ENCODE measurements at regions of chr6 and their contacts with region 1.

Region 1: DNA sequence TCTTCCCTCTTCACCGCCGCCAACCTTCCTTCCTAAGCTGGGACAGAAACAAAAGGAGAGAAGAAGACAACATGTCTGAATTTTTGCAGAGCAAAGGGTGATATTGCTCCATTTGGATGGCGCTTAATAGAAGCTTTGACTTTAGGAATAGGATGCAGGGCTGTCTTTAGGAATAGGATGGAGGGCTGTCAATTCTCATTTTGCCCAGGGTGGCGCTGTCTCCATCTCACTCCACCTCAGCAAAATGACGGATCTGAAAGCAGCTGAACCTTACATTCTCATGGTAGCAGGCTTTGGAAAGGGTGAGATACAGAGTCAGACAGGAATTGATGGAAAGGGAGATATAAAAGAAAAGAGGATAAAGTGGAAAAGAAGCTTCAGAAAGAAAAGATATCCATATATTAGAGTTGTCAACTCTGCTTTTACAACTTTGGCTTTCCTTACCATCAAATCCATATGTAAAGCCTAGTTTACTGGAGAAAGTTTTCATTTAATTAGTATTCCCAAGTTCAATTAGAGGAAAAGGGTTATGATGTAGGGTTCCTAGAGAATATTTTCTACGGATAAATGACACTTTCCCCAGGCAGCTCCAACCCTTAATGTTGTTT is 2.4 kb downstream of the MTCL3 start:
- DNase-seq: peak; percentile 57
- ATAC-seq: peak; percentile 28
- H3K4me3 ChIP-seq: peak overlapping the region; percentile 30 to 72 (median 58)
- H3K4me3 Mint-ChIP-seq: peak overlapping the region; percentile 90
- H3K27ac ChIP-seq: no peak overlapping the region
- H3K27ac Mint-ChIP-seq: peak overlapping the region; percentile 4
- H3K4me1 ChIP-seq: peaks cover 24 to 36% of the 10 kb centered on the region in 2 donors
- H3K4me1 Mint-ChIP-seq: peaks cover 23% of the 10 kb centered on the region
- H3K27me3 ChIP-seq: peaks cover 2 to 57% (median 45%) of the 10 kb centered on the region in 4 experiments
- H3K27me3 Mint-ChIP-seq: peaks cover 53% of the 10 kb centered on the region
- CTCF ChIP-seq: peak; percentile 78

Region 2: GRCh38 chr6:127342946-127343808 is 173.6 kb before region 1 on chr6 and contains the start of gene ECHDC1:
- CTCF ChIA-PET with region 1: no interaction called
- POLR2A ChIA-PET with region 1: no interaction called
- intact Hi-C with region 1: loop called (anchors 5 kb)
- DNase-seq: peak; percentile 80
- ATAC-seq: peak; percentile 69
- H3K4me3 ChIP-seq: peak within 1 kb of the TSS; percentile 70 to 97 (median 94)
- H3K4me3 Mint-ChIP-seq: no peak within 1 kb of the TSS
- H3K27ac ChIP-seq: peak within 1 kb of the TSS; percentile 63 to 77
- H3K27ac Mint-ChIP-seq: no peak within 1 kb of the TSS
- H3K4me1 ChIP-seq: peaks cover 37 to 47% of the 10 kb centered on the region in 2 donors
- H3K4me1 Mint-ChIP-seq: peaks cover 24% of the 10 kb centered on the region
- H3K27me3 ChIP-seq: no peaks in the 10 kb centered on the region
- H3K27me3 Mint-ChIP-seq: no peaks in the 10 kb centered on the region
- CTCF ChIP-seq: no peak
- total RNA-seq, gene ECHDC1: 60.0 and 60.5 TPM in 2 replicates

Region 3: GRCh38 chr6:127503022-127503421 is 13.7 kb before region 1 on chr6:
- CTCF ChIA-PET with region 1: interaction called, 20 read pairs
- POLR2A ChIA-PET with region 1: no interaction called
- intact Hi-C with region 1: no loop called
- DNase-seq: no peak
- ATAC-seq: no peak
- H3K4me3 ChIP-seq: no peak overlapping the region
- H3K4me3 Mint-ChIP-seq: no peak overlapping the region
- H3K27ac ChIP-seq: no peak overlapping the region
- H3K27ac Mint-ChIP-seq: no peak overlapping the region
- H3K4me1 ChIP-seq: no peaks in the 10 kb centered on the region
- H3K4me1 Mint-ChIP-seq: no peaks in the 10 kb centered on the region
- H3K27me3 ChIP-seq: no peaks in the 10 kb centered on the region
- H3K27me3 Mint-ChIP-seq: peaks cover 6% of the 10 kb centered on the region
- CTCF ChIP-seq: no peak

Region 4: DNA sequence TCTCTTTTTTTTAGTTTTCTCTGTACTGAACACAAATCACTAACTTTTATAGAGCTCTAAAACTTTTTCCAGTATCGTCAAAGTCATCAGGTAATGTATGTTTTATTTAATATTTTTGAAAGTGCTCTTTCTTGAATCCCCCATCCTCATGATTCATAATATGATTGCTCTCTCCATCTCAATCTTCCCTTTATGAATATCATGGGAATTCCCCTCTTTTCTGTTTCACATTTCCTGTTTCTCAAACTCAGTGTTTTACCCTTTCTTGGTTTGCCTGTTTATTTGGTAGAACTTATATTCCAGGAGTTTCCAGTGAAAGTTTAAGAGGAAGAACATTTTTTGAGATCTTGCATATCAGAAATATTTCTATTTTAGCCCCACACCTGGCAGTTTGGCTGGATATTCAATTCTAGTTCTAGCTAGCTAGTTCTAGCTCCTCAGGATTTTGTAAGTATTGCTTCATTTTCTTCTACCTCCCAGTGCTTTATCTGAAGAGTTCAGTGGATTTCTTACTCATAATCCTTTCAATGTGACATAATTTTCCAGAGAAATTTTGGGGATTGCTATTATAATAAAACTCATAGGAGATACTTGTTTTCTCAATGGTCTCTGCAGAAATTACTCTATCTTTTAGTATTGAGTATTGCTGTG is 54.1 kb after region 1 on chr6:
- CTCF ChIA-PET with region 1: no interaction called
- POLR2A ChIA-PET with region 1: no interaction called
- intact Hi-C with region 1: no loop called
- DNase-seq: no peak
- ATAC-seq: no peak
- H3K4me3 ChIP-seq: no peak overlapping the region
- H3K4me3 Mint-ChIP-seq: no peak overlapping the region
- H3K27ac ChIP-seq: no peak overlapping the region
- H3K27ac Mint-ChIP-seq: no peak overlapping the region
- H3K4me1 ChIP-seq: no peaks in the 10 kb centered on the region
- H3K4me1 Mint-ChIP-seq: peaks cover 5% of the 10 kb centered on the region
- H3K27me3 ChIP-seq: no peaks in the 10 kb centered on the region
- H3K27me3 Mint-ChIP-seq: no peaks in the 10 kb centered on the region
- CTCF ChIP-seq: no peak